Motor neuron (in vitro differentiated cells): ENCODE measurements at regions of chr2 and their contacts with region 1.

Region 1: GRCh38 chr2:69643602-69644505 is at the start of gene AAK1:
- ATAC-seq: peak; percentile 74 to 88 (median 86)
- H3K4me3 ChIP-seq: peak within 1 kb of the TSS; percentile 60 to 94 (median 86)
- H3K27ac ChIP-seq: peak within 1 kb of the TSS; percentile 96 to 98
- H3K4me1 ChIP-seq: peaks cover 19 to 23% of the 10 kb centered on the region in 2 donors
- total RNA-seq, gene AAK1: 13.6 to 50.2 (median 29.5) TPM

Region 2: GRCh38 chr2:69717861-69718273 is 74.0 kb after region 1 on chr2:
- in situ Hi-C with region 1: loop called in 1 of 9 experiments (anchors 10 kb)
- ATAC-seq: peak in 3 of 8 experiments; percentile 8 to 61 (median 37)
- H3K4me3 ChIP-seq: no peak overlapping the region
- H3K27ac ChIP-seq: no peak overlapping the region
- H3K4me1 ChIP-seq: peaks cover 8% of the 10 kb centered on the region in 2 donors

Region 3: DNA sequence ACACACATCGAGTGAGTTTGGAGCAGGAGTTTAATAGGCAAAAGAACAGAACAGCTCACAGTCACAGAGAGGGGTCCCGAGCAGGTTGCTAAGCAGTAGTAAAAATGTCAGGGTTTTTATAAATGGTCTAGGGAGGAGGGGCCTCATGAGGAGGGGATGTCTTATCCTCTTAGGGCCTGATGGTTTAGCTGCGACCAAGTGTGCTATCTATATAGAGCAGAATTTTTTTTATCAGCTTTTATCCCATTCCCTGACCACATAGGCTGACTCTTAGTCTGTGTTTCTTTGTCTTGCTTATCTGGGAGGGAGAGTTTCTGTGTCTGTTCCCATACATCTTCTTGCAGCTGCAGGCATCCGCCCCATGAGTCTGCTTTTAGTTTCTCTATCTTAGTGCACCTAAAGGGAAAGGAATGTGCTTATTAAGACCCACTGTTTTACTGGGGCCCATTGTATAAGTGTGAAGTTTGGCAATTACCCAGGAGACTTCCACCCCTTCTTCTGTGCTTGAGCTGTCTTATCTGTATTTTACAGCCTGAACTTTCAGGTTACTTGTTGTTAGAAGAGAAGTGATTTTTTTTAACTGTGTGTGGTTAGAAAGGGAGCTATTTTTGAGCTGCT is 155.2 kb after region 1 on chr2:
- in situ Hi-C with region 1: no loop called
- ATAC-seq: peak; percentile 44 to 96 (median 90)
- H3K4me3 ChIP-seq: peak overlapping the region in 1 of 5 donors; percentile 13
- H3K27ac ChIP-seq: no peak overlapping the region
- H3K4me1 ChIP-seq: peaks cover 28 to 29% of the 10 kb centered on the region in 2 donors